Activated naive CD4-positive, alpha-beta T cell treated with anti-CD3 and anti-CD28 coated beads, Interleukin-2, amount 10 ng/mL, durations not matched to agents 7 days and 5 days (primary cell): ENCODE measurements at regions of chr6 and their contacts with region 1.

Region 1: DNA sequence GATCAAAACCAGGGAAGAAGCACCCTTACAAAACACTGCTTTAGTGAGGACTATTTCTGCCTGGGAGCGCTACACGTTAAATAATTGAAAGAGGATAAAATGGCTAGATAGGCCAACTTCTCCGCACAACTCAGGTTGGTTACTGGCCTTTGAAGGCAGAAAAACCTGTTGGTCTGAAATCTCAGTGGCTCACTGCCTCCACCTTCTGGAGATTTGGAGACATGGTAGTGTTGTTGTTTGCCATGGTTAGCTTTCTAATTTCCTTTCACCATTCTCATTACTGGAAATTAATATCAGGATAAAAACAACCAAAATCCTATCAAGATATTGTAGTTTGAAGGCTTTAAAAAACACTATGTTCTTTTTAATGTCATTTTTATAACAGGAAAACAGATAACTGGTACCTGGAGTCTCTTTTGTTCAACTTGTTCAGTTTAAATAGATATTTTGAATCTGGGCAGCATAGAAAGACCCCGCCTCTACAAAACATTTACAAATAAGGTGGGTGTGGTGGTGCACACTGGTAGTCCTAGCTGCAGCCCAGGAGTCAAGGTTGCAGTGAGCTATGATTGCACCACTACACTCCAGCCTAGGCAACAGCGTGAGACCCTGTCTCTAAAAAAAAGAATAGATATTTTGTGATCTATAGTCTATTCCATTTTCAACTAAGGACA is 27.5 kb upstream of the BCLAF1 start:
- DNase-seq: peak; percentile 77
- H3K4me3 Mint-ChIP-seq: no peak overlapping the region
- H3K27ac Mint-ChIP-seq: no peak overlapping the region
- H3K4me1 Mint-ChIP-seq: peaks cover 2% of the 10 kb centered on the region
- H3K27me3 Mint-ChIP-seq: peaks cover 13% of the 10 kb centered on the region

Region 2: DNA sequence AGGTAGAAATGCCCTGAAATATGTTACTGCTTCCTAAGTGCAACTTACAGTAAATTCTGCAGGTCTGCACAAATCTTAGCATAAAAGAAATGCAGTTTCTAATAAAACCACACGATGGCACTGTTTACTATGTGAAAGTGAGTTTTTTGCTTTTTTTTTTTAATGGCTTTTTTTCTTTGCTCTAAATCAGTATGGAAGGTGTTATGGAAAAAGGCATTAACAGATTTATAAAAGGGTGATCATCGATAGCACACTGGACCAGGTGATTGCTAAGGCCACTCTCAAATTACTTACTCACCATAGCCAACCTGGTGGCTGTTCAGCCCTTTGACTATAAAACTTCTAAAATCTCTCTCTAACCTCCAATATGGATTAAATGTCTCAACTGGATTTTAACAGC is 865.5 kb before region 1 on chr6:
- CTCF ChIA-PET with region 1: interaction called, 16 read pairs
- DNase-seq: no peak
- H3K4me3 Mint-ChIP-seq: no peak overlapping the region
- H3K27ac Mint-ChIP-seq: no peak overlapping the region
- H3K4me1 Mint-ChIP-seq: no peaks in the 10 kb centered on the region
- H3K27me3 Mint-ChIP-seq: no peaks in the 10 kb centered on the region

Region 3: DNA sequence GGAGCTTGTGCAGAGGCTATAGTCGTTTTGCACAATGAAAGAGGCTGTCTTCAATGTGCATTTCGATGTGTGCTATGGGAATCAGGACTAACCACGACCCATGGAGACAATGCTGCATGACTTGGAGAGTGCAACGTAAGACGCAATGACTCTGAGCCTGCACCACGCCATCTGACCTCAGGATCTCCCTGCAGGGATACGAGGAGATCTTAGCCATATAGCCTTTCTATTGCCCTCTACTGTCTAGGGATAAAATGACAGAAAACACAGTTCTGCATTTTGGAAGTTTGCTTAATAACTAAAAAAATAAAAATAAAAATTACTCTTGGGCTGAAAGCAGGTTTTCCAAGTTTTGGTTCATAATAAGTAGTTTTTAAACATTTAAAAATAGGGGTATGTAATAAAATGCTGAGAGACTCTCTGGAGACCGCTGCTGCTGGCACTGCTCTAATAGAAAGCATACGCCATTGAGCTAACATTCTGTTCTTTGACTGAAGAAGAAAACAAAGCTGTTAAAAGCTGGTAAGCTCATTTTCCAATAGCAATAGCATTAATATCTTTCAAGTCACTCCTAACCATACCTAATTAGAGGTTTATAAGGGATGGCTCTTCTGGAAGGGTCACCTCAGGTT is 378.5 kb before region 1 on chr6:
- CTCF ChIA-PET with region 1: no interaction called
- DNase-seq: no peak
- H3K4me3 Mint-ChIP-seq: no peak overlapping the region
- H3K27ac Mint-ChIP-seq: no peak overlapping the region
- H3K4me1 Mint-ChIP-seq: no peaks in the 10 kb centered on the region
- H3K27me3 Mint-ChIP-seq: no peaks in the 10 kb centered on the region

Region 4: DNA sequence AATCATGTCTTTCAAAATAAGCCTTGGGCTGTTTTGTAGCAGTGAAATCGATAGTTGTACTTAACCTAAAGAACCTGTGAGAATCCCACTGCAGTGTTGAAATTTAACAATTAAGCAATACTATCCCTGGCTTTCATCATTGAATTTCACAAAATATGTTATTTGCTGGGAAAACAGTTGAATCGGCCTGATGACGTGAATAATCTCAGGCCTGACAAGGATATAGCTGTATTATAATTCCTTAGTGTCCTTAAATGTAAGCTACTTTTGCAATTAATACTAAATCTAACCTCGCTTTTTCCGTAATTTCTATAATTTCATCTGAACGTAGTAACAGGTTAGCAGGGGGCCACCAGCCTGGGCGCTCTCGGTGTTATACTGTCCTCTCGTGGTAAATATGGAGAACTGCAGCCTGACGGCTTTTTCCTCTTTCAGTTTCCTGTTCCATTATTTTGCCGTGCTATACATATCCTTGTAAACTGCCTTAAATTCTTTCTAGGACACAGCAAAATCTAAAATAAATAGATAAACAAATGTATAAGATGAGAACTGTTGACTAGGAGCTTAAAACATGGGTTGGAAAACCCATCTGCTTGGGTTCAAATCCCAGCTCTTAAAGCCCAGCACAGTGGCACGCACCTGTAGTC is 91.0 kb before region 1 on chr6:
- CTCF ChIA-PET with region 1: interaction called, 12 read pairs
- DNase-seq: peak; percentile 64
- H3K4me3 Mint-ChIP-seq: no peak overlapping the region
- H3K27ac Mint-ChIP-seq: no peak overlapping the region
- H3K4me1 Mint-ChIP-seq: no peaks in the 10 kb centered on the region
- H3K27me3 Mint-ChIP-seq: no peaks in the 10 kb centered on the region

Region 5: GRCh38 chr6:136249811-136250685 is 67.1 kb before region 1 on chr6 and contains the start of gene MTFR2:
- CTCF ChIA-PET with region 1: interaction called, 10 read pairs
- DNase-seq: peak; percentile 97
- H3K4me3 Mint-ChIP-seq: peak within 1 kb of the TSS; percentile 91
- H3K27ac Mint-ChIP-seq: peak within 1 kb of the TSS; percentile 86
- H3K4me1 Mint-ChIP-seq: peaks cover 53% of the 10 kb centered on the region
- H3K27me3 Mint-ChIP-seq: peaks cover 5% of the 10 kb centered on the region